Gastrocnemius medialis (tissue), 4 donors: ENCODE measurements at regions of chr19 and their contacts with region 1.

Region 1: DNA sequence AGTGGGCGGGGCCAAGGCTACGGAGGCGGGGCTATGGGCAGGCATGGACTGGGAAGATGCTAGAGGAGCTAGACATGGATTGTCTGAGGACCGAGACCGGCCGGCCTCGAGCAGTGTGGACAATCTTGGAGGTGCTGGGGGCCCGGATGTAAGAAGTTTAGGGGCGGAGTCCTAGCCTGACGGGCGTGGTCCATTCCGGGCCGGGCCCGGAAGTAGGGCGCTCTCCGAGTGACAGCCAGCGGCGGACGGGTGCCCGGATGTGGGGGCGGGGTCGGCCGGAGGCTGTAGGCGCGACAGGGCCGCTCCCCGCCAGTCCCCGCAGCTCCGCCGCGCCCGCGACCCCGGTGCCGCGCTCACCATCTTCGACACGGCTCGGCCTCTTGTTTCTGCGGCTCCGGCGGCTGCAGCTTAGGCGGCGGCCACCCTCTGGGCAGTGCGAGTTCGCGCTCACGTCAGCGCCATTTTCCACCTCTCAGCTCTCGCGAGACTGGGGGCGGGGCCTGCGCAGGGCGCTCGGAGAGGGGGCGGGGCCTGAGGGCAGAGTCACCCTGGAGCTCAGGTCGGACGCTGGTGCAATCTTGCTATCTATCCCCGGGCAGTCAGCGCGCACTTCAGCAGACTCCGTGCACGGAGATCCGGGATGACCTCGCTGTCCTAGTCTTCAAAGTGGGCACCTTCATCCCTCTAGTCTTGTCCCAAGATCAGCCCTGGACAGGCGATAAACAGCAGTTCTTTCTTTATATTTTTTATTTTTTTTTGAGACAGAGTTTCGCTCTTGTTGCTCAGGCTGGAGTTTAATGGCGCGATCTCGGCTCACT is at the start of gene ZNF414:
- DNase-seq: peak; percentile 92 to 97
- ATAC-seq: peak; percentile 93 to 97
- H3K4me3 ChIP-seq: peak within 1 kb of the TSS; percentile 69 to 98 (median 83)
- H3K27ac ChIP-seq: peak within 1 kb of the TSS; percentile 93 to 99 (median 98)
- H3K4me1 ChIP-seq: peaks cover 10 to 19% of the 10 kb centered on the region in 2 donors
- H3K27me3 ChIP-seq: no peaks in the 10 kb centered on the region
- CTCF ChIP-seq: no peak
- POLR2A ChIP-seq: peak; percentile 66 to 71
- total RNA-seq, gene ZNF414: 4.7 to 13.3 (median 6.9) TPM

Region 2: DNA sequence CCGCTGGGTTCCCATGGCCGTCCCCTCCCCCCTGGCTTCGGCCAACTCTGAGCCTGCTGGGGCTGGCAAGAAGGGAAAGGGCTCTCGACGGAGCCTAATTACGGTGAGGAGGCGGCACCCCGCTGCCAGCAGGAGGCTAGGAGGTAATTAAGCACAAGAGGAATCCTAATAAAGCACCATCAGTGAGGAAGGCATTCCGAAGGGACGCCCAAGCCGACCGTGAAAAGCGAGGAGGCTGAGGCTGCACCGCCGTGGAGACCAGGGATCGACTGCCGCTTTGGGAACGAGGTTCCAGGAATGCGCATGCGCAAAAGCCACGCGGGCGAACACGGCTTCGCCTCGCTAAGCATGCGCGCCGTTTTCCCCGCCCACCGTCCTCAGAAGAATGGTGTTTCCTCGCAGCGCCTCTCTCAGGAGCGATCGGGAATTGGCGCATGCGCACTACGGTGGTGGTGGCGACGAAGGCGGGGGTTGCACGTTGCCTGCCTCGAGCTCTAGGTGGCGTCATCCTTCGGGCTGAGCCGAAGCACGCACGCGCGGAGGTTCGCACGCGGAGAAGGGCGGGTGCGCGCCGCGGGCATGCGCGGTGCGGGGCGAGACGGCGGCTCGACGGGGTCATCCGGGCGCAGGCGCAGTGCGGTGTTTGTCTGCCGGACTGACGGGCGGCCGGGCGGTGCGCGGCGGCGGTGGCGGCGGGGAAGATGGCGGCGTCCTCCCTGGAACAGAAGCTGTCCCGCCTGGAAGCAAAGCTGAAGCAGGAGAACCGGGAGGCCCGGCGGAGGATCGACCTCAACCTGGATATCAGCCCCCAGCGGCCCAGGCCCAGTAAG is 610.4 kb before region 1 on chr19 and contains the start of gene MAP2K7:
- in situ Hi-C with region 1: no loop called
- intact Hi-C with region 1: loop called (anchors 10 kb)
- DNase-seq: peak; percentile 99 to 100
- ATAC-seq: peak; percentile 95 to 97
- H3K4me3 ChIP-seq: peak within 1 kb of the TSS; percentile 82 to 97 (median 90)
- H3K27ac ChIP-seq: peak within 1 kb of the TSS; percentile 86 to 92 (median 90)
- H3K4me1 ChIP-seq: peaks cover 22 to 37% of the 10 kb centered on the region in 2 donors
- H3K27me3 ChIP-seq: no peaks in the 10 kb centered on the region
- CTCF ChIP-seq: peak in 4 of 5 experiments; percentile 22 to 55 (median 38)
- POLR2A ChIP-seq: peak; percentile 84 to 86
- total RNA-seq, gene MAP2K7: 17.7 to 41.7 (median 32.9) TPM

Region 3: GRCh38 chr19:8307965-8308866 is 205.7 kb before region 1 on chr19 and contains the start of gene CD320:
- in situ Hi-C with region 1: no loop called
- intact Hi-C with region 1: loop called (anchors 5 kb)
- DNase-seq: peak; percentile 74 to 84
- ATAC-seq: peak; percentile 92 to 93
- H3K4me3 ChIP-seq: peak within 1 kb of the TSS; percentile 62 to 76 (median 66)
- H3K27ac ChIP-seq: peak within 1 kb of the TSS; percentile 81 to 93 (median 84)
- H3K4me1 ChIP-seq: peaks cover 27 to 31% of the 10 kb centered on the region in 2 donors
- H3K27me3 ChIP-seq: no peaks in the 10 kb centered on the region
- CTCF ChIP-seq: peak in 1 of 5 experiments; percentile 14
- POLR2A ChIP-seq: peak; percentile 72 to 75
- total RNA-seq, gene CD320: 49.8 to 85.3 (median 66.1) TPM

Region 4: GRCh38 chr19:8389891-8390616 is 123.8 kb before region 1 on chr19 and contains the start of gene RAB11B:
- in situ Hi-C with region 1: no loop called
- intact Hi-C with region 1: loop called (anchors 1 kb)
- DNase-seq: peak; percentile 99 to 100
- ATAC-seq: peak; percentile 85 to 88
- H3K4me3 ChIP-seq: peak within 1 kb of the TSS; percentile 68 to 100 (median 72)
- H3K27ac ChIP-seq: peak within 1 kb of the TSS; percentile 96 to 100 (median 100)
- H3K4me1 ChIP-seq: peaks cover 46 to 53% of the 10 kb centered on the region in 2 donors
- H3K27me3 ChIP-seq: no peaks in the 10 kb centered on the region
- CTCF ChIP-seq: no peak
- POLR2A ChIP-seq: peak; percentile 69 to 79
- total RNA-seq, gene RAB11B: 13.4 to 42.9 (median 31.0) TPM

Region 5: DNA sequence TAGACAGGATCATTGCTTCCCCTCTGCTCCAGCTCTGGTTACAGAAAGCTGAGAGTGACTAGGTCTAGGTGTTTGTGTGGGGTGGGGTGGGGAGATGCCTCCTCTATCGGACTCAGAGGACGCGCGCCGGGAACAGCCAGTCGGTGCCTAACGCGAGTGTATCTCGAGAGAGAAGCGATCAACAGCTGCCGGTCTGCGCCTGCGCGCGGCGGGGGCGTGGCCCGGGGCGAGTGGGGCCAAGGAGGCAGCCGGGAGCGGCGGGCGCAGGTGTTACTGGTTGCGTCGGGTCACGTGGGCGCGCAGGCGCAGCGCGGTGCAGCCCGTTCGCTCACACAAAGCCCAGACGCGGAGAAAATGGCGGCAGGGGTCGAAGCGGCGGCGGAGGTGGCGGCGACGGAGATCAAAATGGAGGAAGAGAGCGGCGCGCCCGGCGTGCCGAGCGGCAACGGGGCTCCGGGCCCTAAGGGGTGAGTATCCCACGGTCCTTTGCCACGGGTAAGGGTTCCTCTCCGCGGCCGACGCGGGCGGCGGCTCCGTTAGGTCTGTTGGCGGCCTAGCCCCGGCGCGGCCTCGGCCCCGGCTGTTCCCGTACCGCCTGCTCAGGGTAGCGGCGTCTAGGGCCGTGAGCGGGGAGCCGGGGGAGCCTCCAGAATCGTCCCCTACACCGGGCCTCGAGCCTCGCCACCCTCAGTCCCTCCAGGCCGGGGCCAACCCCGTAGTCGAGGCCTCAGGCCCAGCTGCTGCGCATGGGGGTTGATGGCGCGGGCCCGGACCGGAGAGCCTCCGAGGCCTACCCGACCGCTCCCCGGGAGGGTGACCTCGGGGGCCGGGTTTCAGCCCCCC is 69.0 kb before region 1 on chr19 and contains the start of gene HNRNPM:
- in situ Hi-C with region 1: no loop called
- intact Hi-C with region 1: loop called (anchors 2 kb)
- DNase-seq: peak; percentile 98 to 99
- ATAC-seq: peak; percentile 93 to 94
- H3K4me3 ChIP-seq: peak within 1 kb of the TSS; percentile 86 to 92 (median 90)
- H3K27ac ChIP-seq: peak within 1 kb of the TSS; percentile 91 to 98 (median 97)
- H3K4me1 ChIP-seq: peaks cover 38 to 41% of the 10 kb centered on the region in 2 donors
- H3K27me3 ChIP-seq: no peaks in the 10 kb centered on the region
- CTCF ChIP-seq: no peak
- POLR2A ChIP-seq: peak; percentile 97
- total RNA-seq, gene HNRNPM: 42.5 to 74.6 (median 57.8) TPM

Region 6: DNA sequence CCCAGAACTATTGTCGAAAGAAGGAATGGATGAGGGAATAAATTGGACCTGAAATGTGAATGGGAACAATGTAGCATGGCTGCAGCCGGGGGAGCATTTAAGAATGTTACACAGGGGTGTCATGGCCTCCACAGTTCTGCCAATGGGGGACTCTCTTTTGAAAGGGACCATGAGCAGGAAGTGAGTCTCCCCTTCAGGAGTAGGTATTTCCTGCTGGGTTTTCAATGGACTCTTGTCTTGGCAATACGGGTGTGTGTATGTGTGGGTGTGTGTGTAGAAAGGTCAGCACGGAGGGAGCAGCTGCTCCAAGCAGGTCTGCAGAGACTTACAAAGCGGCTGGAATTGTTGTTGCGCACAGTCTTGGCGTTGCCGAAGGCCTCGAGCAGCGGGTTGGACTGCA is 38.9 kb after region 1 on chr19:
- in situ Hi-C with region 1: no loop called
- intact Hi-C with region 1: no loop called
- DNase-seq: no peak
- ATAC-seq: no peak
- H3K4me3 ChIP-seq: no peak overlapping the region
- H3K27ac ChIP-seq: no peak overlapping the region
- H3K4me1 ChIP-seq: no peaks in the 10 kb centered on the region
- H3K27me3 ChIP-seq: no peaks in the 10 kb centered on the region
- CTCF ChIP-seq: no peak
- POLR2A ChIP-seq: no peak

Region 7: DNA sequence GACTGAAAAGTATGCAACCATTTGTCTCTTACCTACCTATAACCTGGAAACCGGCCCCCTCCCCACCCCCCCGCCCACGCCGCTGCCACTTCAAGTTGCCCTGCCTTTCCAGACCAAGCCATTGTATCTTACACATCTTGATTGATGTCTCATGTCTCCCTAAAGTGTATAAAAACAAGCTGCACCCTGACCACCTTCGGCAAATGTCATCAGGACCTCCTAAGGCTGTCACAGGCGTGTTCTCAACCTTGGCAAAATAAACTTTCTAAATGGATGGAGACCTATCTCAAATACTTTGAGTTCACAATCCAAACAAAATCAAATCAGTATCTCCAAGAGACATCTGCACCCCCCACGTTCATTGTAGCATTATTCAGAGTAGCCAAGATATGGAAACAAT is 490.3 kb after region 1 on chr19:
- in situ Hi-C with region 1: no loop called
- intact Hi-C with region 1: no loop called
- DNase-seq: no peak
- ATAC-seq: no peak
- H3K4me3 ChIP-seq: no peak overlapping the region
- H3K27ac ChIP-seq: no peak overlapping the region
- H3K4me1 ChIP-seq: no peaks in the 10 kb centered on the region
- H3K27me3 ChIP-seq: no peaks in the 10 kb centered on the region
- CTCF ChIP-seq: no peak
- POLR2A ChIP-seq: no peak